HEK293 (cell line): ENCODE measurements at regions of chr15 and their contacts with region 1.

Region 1: DNA sequence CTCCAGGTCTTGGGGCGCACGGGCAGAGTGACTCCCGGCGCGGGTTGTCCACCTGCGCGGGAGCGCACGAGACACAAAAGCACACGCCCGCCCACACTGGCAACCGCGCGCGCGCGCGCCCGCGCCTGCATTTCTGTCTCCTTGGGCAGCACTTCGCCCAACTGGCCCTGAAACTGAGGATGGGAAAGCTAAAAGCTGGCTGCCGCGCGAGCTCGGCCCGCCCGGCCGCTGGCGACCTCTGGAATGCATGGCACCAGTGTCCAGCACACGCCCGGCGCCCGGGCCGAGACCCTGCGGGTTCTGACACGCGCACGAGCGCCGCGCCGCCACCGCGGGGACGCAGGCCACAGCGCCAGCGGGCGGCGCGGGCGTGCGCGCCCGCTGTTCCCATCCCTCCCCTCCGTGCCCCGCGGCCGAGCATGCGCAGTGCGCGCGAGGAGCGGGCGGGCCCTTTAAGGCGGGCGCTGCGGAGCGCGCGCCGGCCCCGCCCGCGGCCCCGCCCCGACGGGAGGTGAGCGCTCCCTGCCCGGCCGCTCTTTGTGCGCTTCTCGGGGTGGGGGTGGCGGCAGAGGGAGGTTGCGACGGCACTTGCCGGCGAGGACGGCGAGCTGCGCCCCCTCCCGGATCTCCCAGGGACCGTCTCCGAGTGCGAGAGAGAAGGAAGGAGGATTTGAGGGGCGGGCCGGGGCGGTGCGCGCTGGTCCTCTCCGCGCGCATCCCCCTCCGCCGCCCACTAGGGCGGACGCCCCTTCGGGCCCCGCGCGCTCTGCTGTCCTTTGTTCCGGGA is 1.0 kb upstream of the MEX3B start:
- H3K4me3 ChIP-seq: peak overlapping the region; percentile 85
- H3K27ac ChIP-seq: peak overlapping the region; percentile 99
- H3K4me1 ChIP-seq: peaks cover 26% of the 10 kb centered on the region
- CTCF ChIP-seq: peak; percentile 86

Region 2: GRCh38 chr15:81939604-81940440 is 107.0 kb before region 1 on chr15:
- CTCF ChIA-PET with region 1: no interaction called
- POLR2A ChIA-PET with region 1: interaction called, 15 read pairs
- H3K4me3 ChIP-seq: no peak overlapping the region
- H3K27ac ChIP-seq: peak overlapping the region; percentile 54
- H3K4me1 ChIP-seq: peaks cover 20% of the 10 kb centered on the region
- CTCF ChIP-seq: peak; percentile 43; the same call in 1 of the 2 replicates

Region 3: DNA sequence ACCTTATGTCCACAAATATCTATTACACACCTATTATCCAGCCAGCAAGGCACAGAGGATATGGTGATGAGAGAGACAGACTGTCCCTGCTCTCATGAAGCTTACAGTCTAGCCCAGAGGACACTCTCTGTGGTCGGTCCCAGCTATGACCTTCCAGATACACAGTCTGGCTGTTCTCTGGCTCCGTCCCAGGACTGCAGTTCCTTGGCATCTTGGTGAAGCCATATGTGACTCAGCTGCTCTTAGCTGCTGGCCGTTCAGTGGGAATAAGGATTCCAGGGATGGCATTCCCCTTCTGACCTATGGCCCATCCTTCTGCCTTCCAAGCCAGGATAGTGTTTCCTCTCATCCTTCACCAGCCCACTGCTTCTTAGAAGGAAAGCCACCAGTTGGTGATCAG is 31.9 kb before region 1 on chr15:
- CTCF ChIA-PET with region 1: no interaction called
- POLR2A ChIA-PET with region 1: no interaction called
- H3K4me3 ChIP-seq: no peak overlapping the region
- H3K27ac ChIP-seq: no peak overlapping the region
- H3K4me1 ChIP-seq: no peaks in the 10 kb centered on the region
- CTCF ChIP-seq: no peak

Region 4: GRCh38 chr15:82064824-82065223 is 18.0 kb after region 1 on chr15:
- CTCF ChIA-PET with region 1: interaction called, 11 read pairs
- POLR2A ChIA-PET with region 1: interaction called, 8 read pairs
- H3K4me3 ChIP-seq: no peak overlapping the region
- H3K27ac ChIP-seq: no peak overlapping the region
- H3K4me1 ChIP-seq: peaks cover 7% of the 10 kb centered on the region; the same call in 1 of the 2 replicates
- CTCF ChIP-seq: no peak

Region 5: DNA sequence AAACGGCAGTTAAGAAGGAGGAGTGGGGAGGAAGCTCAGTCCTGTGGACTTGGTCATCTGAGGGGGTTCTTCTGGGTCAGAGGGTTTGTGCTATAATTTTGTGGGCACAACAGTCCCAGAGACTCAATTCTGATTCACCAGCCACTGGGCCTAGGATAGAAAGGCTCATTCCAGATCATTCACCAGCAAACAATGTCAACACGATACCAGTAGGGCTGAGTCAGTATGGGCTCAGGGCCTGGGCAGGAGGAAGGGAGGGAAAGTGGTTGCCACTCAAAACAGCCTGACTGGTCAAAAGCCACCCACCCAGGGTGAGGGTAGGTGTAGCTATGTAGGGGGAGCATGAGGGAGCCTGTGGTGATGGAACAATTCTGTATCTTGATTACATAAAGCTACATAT is 85.9 kb after region 1 on chr15:
- CTCF ChIA-PET with region 1: no interaction called
- POLR2A ChIA-PET with region 1: no interaction called
- H3K4me3 ChIP-seq: no peak overlapping the region
- H3K27ac ChIP-seq: no peak overlapping the region
- H3K4me1 ChIP-seq: peaks cover 10% of the 10 kb centered on the region; the same call in 1 of the 2 replicates
- CTCF ChIP-seq: no peak

Region 6: GRCh38 chr15:82312586-82313349 is 265.9 kb after region 1 on chr15:
- CTCF ChIA-PET with region 1: no interaction called
- POLR2A ChIA-PET with region 1: no interaction called
- H3K4me3 ChIP-seq: no peak overlapping the region
- H3K27ac ChIP-seq: no peak overlapping the region
- H3K4me1 ChIP-seq: no peaks in the 10 kb centered on the region
- CTCF ChIP-seq: no peak